SK-N-SH (cell line): ENCODE measurements at regions of chr9 and their contacts with region 1.

Region 1: GRCh38 chr9:124309665-124310064 is 51.9 kb downstream of the NEK6 start:
- DNase-seq: no peak
- H3K4me3 ChIP-seq: no peak overlapping the region
- H3K27ac ChIP-seq: peak overlapping the region in 1 of 2 experiments; percentile 61; a peak in 2 of 4 replicates
- H3K4me1 ChIP-seq: peaks cover 0 to 23% of the 10 kb centered on the region in 2 experiments; a peak in 2 of 4 replicates
- H3K27me3 ChIP-seq: no peaks in the 10 kb centered on the region
- CTCF ChIP-seq: no peak
- EP300 ChIP-seq: peak in 1 of 2 experiments; percentile 83; a peak in 2 of 4 replicates
- RAD21 ChIP-seq: no peak

Region 2: GRCh38 chr9:124320062-124320973 is 10.7 kb after region 1 on chr9:
- CTCF ChIA-PET with region 1: interaction called, 13 read pairs
- POLR2A ChIA-PET with region 1: no interaction called
- DNase-seq: peak; percentile 92
- H3K4me3 ChIP-seq: no peak overlapping the region; a peak in 2 of 4 replicates
- H3K27ac ChIP-seq: no peak overlapping the region
- H3K4me1 ChIP-seq: no peaks in the 10 kb centered on the region; a peak in 1 of 4 replicates
- H3K27me3 ChIP-seq: no peaks in the 10 kb centered on the region
- CTCF ChIP-seq: peak; percentile 83
- EP300 ChIP-seq: no peak
- RAD21 ChIP-seq: peak; percentile 78